PC-9 (cell line): ENCODE measurements at regions of chr1 and their contacts with region 1.

Region 1: GRCh38 chr1:231421993-231422764 is at the start of gene EGLN1:
- DNase-seq: peak; percentile 69 to 87
- H3K4me3 ChIP-seq: peak within 1 kb of the TSS; percentile 89
- H3K27ac ChIP-seq: peak within 1 kb of the TSS; percentile 65
- H3K4me1 ChIP-seq: peaks cover 41% of the 10 kb centered on the region
- H3K27me3 ChIP-seq: no peaks in the 10 kb centered on the region
- CTCF ChIP-seq: peak; percentile 32; the same call in 1 of the 2 replicates
- total RNA-seq, gene EGLN1: 10.9 and 18.8 TPM in 2 replicates

Region 2: DNA sequence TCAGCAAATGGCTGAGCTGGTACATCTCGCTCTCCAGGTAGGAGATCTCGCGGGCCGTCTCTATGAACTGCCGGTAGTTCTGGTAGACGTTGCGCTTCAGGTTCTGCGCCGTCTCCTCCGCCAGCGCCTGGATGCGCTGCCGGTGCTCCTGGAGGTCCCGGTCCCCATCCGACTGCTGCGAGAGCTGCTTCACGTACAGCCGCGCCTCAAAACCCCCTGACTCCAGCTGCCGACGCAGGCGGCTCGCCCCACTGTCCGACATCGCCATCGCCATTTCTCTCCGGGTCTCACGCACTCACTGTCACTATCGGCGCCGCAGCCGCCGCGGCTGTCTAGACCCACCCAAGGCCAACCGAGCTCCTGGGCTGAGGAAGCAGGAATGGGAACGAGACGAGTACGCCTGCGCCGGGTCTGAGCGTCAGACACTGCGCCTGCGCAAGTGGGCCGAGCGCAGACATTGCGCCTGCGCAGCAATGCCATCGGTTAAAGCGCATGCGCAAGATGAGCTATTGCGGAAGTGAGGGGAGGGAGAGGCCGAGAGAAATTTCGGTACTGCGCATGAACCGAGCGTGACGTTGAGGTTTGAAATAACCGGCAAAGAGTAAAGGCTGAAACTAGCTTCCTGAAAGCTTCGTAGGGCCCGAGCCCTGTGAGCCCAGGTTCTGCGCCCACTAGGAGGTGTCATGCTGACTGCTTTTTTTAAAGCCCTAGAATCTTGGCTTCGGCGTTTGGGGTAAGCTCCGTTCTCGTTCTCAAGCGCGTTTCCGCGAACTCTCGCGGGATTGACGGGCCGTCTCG is 84.5 kb before region 1 on chr1 and contains the start of gene EXOC8:
- CTCF ChIA-PET with region 1: no interaction called
- POLR2A ChIA-PET with region 1: interaction called, 4 read pairs
- intact Hi-C with region 1: loop called (anchors 2 kb)
- DNase-seq: peak; percentile 92 to 98
- H3K4me3 ChIP-seq: peak within 1 kb of the TSS; percentile 72
- H3K27ac ChIP-seq: peak within 1 kb of the TSS; percentile 89
- H3K4me1 ChIP-seq: peaks cover 51% of the 10 kb centered on the region
- H3K27me3 ChIP-seq: no peaks in the 10 kb centered on the region
- CTCF ChIP-seq: no peak
- total RNA-seq, gene EXOC8: 11.2 and 12.1 TPM in 2 replicates

Region 3: GRCh38 chr1:231357831-231358354 is 64.3 kb before region 1 on chr1:
- CTCF ChIA-PET with region 1: interaction called, 3 read pairs
- POLR2A ChIA-PET with region 1: no interaction called
- intact Hi-C with region 1: loop called (anchors 2 kb)
- DNase-seq: peak; percentile 14 to 71
- H3K4me3 ChIP-seq: no peak overlapping the region
- H3K27ac ChIP-seq: no peak overlapping the region
- H3K4me1 ChIP-seq: no peaks in the 10 kb centered on the region
- H3K27me3 ChIP-seq: no peaks in the 10 kb centered on the region
- CTCF ChIP-seq: peak; percentile 89

Region 4: DNA sequence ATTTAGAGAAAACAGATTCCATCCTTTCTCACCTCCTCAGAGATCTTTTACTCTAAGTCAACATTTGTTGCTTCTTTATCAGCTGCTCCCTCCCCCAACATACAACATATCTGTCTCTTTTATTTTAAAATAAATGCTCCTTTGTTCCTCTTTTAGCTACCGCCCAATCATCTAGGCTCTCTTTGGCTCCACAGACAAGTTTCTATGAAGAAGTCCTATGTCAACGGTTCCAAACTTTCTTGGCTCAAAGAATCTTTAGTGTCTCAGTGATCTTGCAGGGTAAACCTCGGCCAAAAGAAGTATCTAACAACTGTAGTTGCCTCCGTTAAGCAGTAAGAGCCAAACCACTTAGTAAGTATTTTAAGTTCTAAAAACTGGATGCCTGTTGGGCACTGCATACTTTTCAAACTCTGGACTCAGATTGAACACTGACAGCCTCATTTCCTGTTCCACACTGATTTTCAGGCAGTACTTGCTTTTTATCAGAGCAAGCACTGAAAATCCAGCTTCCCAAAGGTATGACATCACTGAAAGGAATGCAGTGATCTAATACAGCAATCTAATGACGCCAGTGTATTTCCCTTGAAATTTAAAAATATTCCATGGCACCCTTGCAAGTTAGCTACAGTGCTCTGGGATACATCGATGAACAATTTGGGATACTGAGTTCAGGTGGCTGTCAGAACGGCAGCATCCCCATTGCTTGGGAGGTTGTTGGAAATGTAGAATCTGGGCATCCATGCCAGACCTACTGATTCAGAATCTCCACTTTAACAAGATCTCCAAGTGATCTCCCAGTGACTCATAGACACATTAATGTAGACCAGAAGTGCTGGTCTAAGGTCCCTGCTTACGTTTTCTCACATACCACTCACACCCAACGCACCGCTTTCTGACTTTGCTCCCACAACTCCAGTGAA is 26.8 kb before region 1 on chr1:
- CTCF ChIA-PET with region 1: no interaction called
- POLR2A ChIA-PET with region 1: no interaction called
- intact Hi-C with region 1: loop called (anchors 2 kb)
- DNase-seq: peak; percentile 43 to 84
- H3K4me3 ChIP-seq: peak overlapping the region; percentile 33; the same call in 1 of the 2 replicates
- H3K27ac ChIP-seq: peak overlapping the region; percentile 79
- H3K4me1 ChIP-seq: peaks cover 34% of the 10 kb centered on the region
- H3K27me3 ChIP-seq: no peaks in the 10 kb centered on the region
- CTCF ChIP-seq: no peak

Region 5: DNA sequence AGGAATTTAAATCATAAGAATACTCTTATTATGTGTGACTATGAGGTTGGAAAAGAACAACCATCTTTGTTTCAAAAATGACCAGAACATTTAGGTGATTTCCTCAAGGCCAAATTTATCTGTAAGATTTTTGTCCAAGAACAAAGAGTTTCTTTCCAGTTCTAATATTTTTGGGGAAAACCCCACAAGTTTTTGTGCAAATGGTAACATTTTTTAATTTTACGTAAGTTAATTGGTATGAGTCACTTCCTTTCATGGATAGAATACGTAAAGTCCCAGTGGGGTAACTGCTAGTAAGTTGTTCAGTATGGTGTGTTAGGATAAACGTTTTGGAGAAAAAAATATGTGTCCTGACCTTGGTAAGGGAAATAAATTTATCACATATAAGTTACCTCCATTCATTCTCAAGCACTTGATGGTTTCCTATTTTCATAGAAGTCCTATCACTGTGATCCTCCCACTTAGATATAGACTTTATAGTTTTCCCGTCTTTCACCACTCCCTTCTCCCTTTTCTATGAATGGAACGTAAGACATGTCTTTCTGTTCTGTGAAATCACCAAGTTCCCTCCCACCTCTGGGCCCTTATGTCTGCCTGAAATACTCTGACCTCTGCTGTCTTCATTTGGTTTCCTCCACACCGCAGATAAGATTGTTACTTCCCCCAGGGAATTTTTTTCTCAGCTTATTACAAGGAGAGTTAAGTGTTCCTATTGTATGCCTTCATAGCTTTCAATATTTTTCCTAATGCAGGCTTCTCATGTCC is 71.4 kb after region 1 on chr1:
- CTCF ChIA-PET with region 1: no interaction called
- POLR2A ChIA-PET with region 1: interaction called, 12 read pairs
- intact Hi-C with region 1: no loop called
- DNase-seq: no peak
- H3K4me3 ChIP-seq: no peak overlapping the region
- H3K27ac ChIP-seq: no peak overlapping the region
- H3K4me1 ChIP-seq: no peaks in the 10 kb centered on the region
- H3K27me3 ChIP-seq: no peaks in the 10 kb centered on the region
- CTCF ChIP-seq: no peak

Region 6: GRCh38 chr1:231528172-231529029 is 106.2 kb after region 1 on chr1 and contains the start of gene TSNAX:
- CTCF ChIA-PET with region 1: no interaction called
- POLR2A ChIA-PET with region 1: no interaction called
- intact Hi-C with region 1: loop called (anchors 1 kb)
- DNase-seq: peak; percentile 75 to 91
- H3K4me3 ChIP-seq: peak within 1 kb of the TSS; percentile 91
- H3K27ac ChIP-seq: peak within 1 kb of the TSS; percentile 83
- H3K4me1 ChIP-seq: peaks cover 20% of the 10 kb centered on the region
- H3K27me3 ChIP-seq: no peaks in the 10 kb centered on the region
- CTCF ChIP-seq: no peak
- total RNA-seq, gene TSNAX: 23.5 and 32.1 TPM in 2 replicates